ENCODE measurements at regions of chr12 and their contacts with region 1.

Region 1: DNA sequence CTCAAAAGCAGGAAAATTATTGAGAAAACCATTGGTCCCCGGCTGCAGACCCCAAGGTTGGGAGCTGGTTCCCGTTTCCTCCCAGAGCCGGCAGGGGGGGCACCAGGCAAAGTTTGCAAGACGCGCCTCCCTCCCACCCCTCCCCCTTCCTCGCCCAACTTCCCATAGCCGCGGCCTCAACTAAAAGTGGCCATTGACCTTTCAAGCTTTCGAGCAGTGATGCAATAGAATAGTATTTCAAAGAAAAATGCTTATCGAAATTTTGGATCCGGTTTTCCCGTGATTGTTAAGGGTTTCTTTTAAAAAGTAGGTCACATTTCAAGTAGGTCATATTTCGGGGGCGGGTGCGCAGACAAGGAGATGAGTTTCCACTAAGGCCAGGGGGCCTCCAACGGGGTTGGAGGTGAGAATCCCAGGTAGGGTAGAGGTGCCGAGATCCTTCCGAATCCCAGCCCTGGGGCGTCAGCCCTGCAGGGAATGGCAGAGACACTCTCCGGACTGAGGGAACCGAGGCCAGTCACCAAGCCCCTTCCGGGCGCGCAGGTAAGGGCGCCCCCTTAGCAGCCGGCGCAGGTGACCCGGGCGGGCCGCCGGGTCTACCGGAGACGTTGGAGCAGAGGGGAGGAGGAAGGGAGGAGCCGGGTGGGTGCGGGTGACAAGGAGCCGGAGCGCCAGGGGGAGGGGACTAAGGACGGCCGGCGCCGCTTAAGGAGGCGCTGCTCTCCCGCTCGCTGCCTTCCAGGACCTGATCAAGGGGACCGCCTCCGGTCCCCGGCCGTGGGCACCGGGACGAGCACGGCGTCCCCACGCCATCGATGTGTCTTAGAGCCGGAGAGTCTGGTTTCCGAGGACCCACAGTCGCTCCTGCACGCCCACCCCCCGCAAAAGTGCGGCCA is 2.6 kb upstream of the SOCS2 start:
- DNase-seq: peak; percentile 84
- ATAC-seq: peak; percentile 65
- H3K4me3 ChIP-seq: peak overlapping the region; percentile 76
- H3K27ac ChIP-seq: peak overlapping the region; percentile 73
- H3K4me1 ChIP-seq: no peaks in the 10 kb centered on the region
- H3K27me3 ChIP-seq: no peaks in the 10 kb centered on the region
- CTCF ChIP-seq: peak; percentile 78
- POLR2A ChIP-seq: no peak
- RAD21 ChIP-seq: peak; percentile 81

Region 2: DNA sequence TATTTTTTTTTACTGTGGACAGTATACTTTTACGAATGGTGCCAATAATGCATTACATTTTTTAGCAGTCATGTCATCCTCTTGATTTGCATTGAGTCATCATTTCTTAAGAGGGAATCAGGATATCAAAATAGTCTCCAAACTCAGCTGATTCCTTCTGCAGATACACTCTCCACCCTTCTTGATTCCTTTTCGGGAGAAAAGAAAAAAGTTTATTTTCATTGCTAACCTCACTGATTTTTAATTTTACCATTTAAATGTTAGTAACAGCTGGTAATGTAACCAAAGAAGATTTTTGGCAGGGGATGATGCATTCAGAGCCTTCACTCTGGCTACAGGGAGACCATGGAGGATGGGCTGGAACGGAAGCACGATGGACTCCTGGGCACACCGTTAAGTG is 55.1 kb before region 1 on chr12:
- CTCF ChIA-PET with region 1: no interaction called
- POLR2A ChIA-PET with region 1: interaction called, 23 read pairs
- dilution Hi-C with region 1: no loop called
- in situ Hi-C with region 1: no loop called
- intact Hi-C with region 1: no loop called
- DNase-seq: peak; percentile 91
- ATAC-seq: peak; percentile 87
- H3K4me3 ChIP-seq: no peak overlapping the region
- H3K27ac ChIP-seq: peak overlapping the region; percentile 37; the same call in 1 of the 2 replicates
- H3K4me1 ChIP-seq: peaks cover 5% of the 10 kb centered on the region
- H3K27me3 ChIP-seq: no peaks in the 10 kb centered on the region
- CTCF ChIP-seq: no peak
- POLR2A ChIP-seq: no peak
- RAD21 ChIP-seq: no peak

Region 3: GRCh38 chr12:93677195-93678064 is 107.5 kb after region 1 on chr12 and contains the start of gene CRADD:
- CTCF ChIA-PET with region 1: interaction called, 5 read pairs
- POLR2A ChIA-PET with region 1: no interaction called
- dilution Hi-C with region 1: no loop called
- in situ Hi-C with region 1: no loop called
- intact Hi-C with region 1: loop called (anchors 5 kb)
- DNase-seq: peak; percentile 99
- ATAC-seq: peak; percentile 96
- H3K4me3 ChIP-seq: peak within 1 kb of the TSS; percentile 55
- H3K27ac ChIP-seq: peak within 1 kb of the TSS; percentile 87
- H3K4me1 ChIP-seq: peaks cover 2% of the 10 kb centered on the region; the same call in 1 of the 2 replicates
- H3K27me3 ChIP-seq: no peaks in the 10 kb centered on the region
- CTCF ChIP-seq: no peak
- POLR2A ChIP-seq: peak; percentile 86
- RAD21 ChIP-seq: 0 out of 2 replicates have a peak, but pooled peaks have one; percentile 4
- total RNA-seq, gene CRADD: 12.2 and 14.0 TPM in 2 replicates

Region 4: GRCh38 chr12:93766796-93767523 is 197.1 kb after region 1 on chr12:
- CTCF ChIA-PET with region 1: interaction called, 4 read pairs
- POLR2A ChIA-PET with region 1: no interaction called
- dilution Hi-C with region 1: no loop called
- in situ Hi-C with region 1: no loop called
- intact Hi-C with region 1: loop called (anchors 1 kb)
- DNase-seq: peak; percentile 76
- ATAC-seq: peak; percentile 92
- H3K4me3 ChIP-seq: no peak overlapping the region
- H3K27ac ChIP-seq: no peak overlapping the region
- H3K4me1 ChIP-seq: peaks cover 2% of the 10 kb centered on the region; the same call in 1 of the 2 replicates
- H3K27me3 ChIP-seq: no peaks in the 10 kb centered on the region
- CTCF ChIP-seq: peak; percentile 79
- POLR2A ChIP-seq: no peak
- RAD21 ChIP-seq: peak; percentile 90

Region 5: DNA sequence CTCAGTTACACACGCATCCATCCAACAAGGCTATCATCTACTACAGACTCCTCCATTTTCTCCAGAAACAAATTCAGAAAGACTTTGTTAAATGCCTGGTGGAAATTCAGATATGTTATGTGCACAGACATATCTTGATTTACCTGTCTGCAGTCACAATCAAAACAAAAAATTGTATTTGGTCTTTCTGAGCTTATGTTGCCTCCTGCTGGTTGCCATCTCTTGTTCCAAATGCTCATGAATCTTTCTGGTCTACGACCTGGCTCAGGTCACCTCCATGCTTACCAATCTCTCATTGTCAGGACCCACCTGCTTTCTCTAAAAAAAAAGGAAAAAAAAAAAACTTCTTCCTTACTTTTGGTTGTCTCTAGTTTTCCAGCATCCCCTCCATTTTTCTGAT is 409.3 kb after region 1 on chr12:
- CTCF ChIA-PET with region 1: no interaction called
- POLR2A ChIA-PET with region 1: no interaction called
- dilution Hi-C with region 1: no loop called
- in situ Hi-C with region 1: loop called (anchors 10 kb)
- intact Hi-C with region 1: loop called (anchors 1 kb)
- DNase-seq: peak; percentile 38
- ATAC-seq: no peak
- H3K4me3 ChIP-seq: no peak overlapping the region
- H3K27ac ChIP-seq: no peak overlapping the region
- H3K4me1 ChIP-seq: peaks cover 15% of the 10 kb centered on the region
- H3K27me3 ChIP-seq: no peaks in the 10 kb centered on the region
- CTCF ChIP-seq: peak; percentile 54
- POLR2A ChIP-seq: no peak
- RAD21 ChIP-seq: peak; percentile 66

Measured in IMR-90 (cell line).